Mammary epithelial cell (primary cell): ENCODE measurements at regions of chrX and their contacts with region 1.

Region 1: DNA sequence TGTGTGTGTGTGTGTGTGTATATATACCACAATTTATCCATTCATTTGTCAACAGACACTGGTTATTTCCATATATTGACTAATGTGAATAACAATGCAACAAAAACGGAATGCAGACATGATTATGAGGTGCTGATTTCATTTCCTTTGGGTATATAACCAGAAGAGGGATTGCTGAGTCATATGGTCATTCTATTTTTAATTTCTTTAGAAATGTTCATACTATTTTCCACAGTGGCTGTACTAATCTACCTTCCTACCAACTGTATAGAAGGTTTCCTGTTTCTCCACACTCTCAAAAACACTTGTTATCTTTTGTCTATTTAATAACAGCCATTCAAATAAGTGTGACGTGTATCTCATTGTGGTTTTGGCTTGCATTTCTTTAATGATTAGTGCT is 269.9 kb downstream of the OPHN1 start:
- DNase-seq: peak; percentile 16
- H3K4me3 ChIP-seq: no peak overlapping the region
- H3K27ac ChIP-seq: no peak overlapping the region
- H3K4me1 ChIP-seq: no peaks in the 10 kb centered on the region
- H3K27me3 ChIP-seq: no peaks in the 10 kb centered on the region
- CTCF ChIP-seq: no peak

Region 2: DNA sequence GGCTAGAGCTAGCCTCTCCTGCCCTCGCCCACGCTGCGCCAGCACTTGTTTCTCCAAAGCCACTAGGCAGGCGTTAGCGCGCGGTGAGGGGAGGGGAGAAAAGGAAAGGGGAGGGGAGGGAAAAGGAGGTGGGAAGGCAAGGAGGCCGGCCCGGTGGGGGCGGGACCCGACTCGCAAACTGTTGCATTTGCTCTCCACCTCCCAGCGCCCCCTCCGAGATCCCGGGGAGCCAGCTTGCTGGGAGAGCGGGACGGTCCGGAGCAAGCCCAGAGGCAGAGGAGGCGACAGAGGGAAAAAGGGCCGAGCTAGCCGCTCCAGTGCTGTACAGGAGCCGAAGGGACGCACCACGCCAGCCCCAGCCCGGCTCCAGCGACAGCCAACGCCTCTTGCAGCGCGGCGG is 619.6 kb before region 1 on chrX and contains the start of gene AR:
- CTCF ChIA-PET with region 1: interaction called, 20 read pairs
- dilution Hi-C with region 1: no loop called
- in situ Hi-C with region 1: no loop called
- intact Hi-C with region 1: no loop called
- DNase-seq: no peak
- H3K4me3 ChIP-seq: peak within 1 kb of the TSS in 2 of 3 experiments; percentile 5 to 22
- H3K27ac ChIP-seq: no peak within 1 kb of the TSS
- H3K4me1 ChIP-seq: no peaks in the 10 kb centered on the region
- H3K27me3 ChIP-seq: peaks cover 19% of the 10 kb centered on the region
- CTCF ChIP-seq: no peak
- total RNA-seq, gene AR: under 0.01 TPM in 1 of 2 donors, not detected in the other

Region 3: DNA sequence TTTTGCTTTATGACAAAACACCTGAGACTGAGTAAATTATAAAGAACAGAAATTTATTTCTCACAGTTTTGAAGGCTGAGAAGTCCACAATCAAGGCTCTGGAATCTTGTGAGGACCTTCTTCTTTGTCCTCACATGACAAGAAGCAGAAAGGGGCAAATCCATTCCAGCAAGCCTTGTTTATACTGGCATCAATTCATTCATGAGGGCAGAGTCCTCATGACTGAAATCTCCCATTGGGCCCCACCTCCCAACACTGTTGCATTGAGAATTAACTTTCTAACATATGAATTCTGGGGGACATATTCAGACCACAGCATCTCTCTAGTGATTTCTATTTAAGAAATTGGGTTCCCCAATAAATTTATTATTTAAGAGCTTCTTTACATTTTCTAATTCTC is 224.2 kb before region 1 on chrX:
- CTCF ChIA-PET with region 1: no interaction called
- dilution Hi-C with region 1: no loop called
- in situ Hi-C with region 1: no loop called
- intact Hi-C with region 1: no loop called
- DNase-seq: no peak
- H3K4me3 ChIP-seq: no peak overlapping the region
- H3K27ac ChIP-seq: no peak overlapping the region
- H3K4me1 ChIP-seq: no peaks in the 10 kb centered on the region
- H3K27me3 ChIP-seq: no peaks in the 10 kb centered on the region
- CTCF ChIP-seq: no peak